ENCODE measurements at regions of chr20 and their contacts with region 1.

Region 1: GRCh38 chr20:13771853-13772453 is 12.8 kb downstream of the ESF1 start:
- DNase-seq: no peak
- H3K4me3 ChIP-seq: no peak overlapping the region
- CTCF ChIP-seq: peak; percentile 2

Region 2: DNA sequence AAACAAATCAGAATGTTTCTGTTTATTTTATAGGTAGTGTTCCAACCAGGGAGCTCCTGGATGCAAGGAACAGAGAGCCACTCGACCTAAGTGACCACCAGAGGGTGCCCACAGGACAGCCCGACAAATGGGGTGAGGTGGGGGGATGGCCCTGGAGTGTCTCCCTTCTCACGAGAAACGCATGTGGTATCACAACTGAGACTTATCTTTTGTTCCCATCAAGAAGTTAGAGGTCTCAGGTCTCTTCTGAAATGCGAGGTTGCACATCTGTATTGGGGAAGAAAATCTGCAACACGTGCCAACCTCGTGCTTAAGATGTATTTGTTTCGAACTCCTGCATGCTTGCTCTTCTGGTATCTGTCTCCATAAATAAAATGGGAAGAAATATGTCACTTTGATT is 446.9 kb before region 1 on chr20:
- CTCF ChIA-PET with region 1: interaction called, 15 read pairs
- POLR2A ChIA-PET with region 1: no interaction called
- DNase-seq: no peak
- H3K4me3 ChIP-seq: no peak overlapping the region
- CTCF ChIP-seq: peak; percentile 68

Region 3: DNA sequence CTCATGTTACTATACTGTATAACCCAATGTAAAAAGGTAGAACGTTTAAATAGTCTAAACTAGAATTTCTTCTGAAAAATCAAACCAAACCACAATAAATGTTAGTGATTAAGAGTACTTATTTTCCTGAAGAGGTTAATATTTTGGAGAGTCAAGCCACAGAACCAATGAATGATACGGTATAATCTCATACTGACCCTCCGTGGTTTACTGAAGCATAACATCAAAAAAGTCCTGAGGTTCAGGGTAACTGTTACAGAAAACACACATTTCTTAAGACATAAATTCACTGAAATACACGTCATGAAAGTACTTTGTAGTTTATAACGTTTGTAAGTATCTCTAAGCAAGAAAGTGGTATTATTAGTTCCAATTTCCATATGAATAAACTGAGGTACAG is 16.1 kb before region 1 on chr20:
- CTCF ChIA-PET with region 1: interaction called, 32 read pairs
- POLR2A ChIA-PET with region 1: no interaction called
- DNase-seq: no peak
- H3K4me3 ChIP-seq: no peak overlapping the region
- CTCF ChIP-seq: no peak

Region 4: DNA sequence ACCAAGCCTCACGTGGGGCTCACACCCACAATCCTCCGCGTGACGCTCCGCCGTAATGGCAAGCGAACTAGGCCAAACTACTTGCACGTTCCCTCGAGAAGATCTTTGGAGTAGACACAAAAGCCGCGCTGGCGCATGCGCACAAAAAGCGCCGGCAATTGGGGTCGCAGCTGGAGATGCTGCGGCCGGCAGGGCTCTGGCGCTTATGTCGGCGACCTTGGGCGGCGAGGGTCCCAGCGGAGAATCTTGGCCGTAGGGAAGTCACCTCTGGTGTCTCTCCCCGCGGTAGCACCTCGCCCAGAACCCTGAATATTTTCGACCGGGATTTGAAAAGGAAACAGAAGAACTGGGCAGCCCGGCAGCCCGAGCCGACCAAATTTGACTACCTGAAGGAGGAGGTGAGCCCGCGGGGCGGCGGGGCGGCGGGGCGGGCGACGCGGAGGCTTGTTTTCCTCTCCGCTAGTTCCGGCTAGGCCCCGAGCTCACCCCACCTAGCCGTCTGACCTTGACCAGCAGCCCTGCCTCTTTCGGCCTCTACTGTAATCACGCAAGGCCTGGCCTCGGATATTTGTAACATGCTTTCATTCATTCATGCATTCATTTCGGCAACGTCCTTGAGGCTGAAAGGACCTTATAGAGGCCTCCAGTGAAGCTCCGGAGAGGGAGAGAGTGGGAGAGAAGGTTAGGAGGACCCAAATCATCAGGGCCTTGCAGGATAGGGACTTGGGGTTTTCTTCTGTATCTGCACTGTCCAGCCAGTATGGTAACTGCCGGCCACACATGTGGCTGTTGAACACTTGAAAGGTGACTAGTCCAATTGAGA is 13.2 kb after region 1 on chr20 and contains the starts of genes ESF1 and NDUFAF5:
- CTCF ChIA-PET with region 1: interaction called, 27 read pairs
- POLR2A ChIA-PET with region 1: interaction called, 4 read pairs
- DNase-seq: peak; percentile 81
- H3K4me3 ChIP-seq: peak within 1 kb of the TSS; percentile 90
- CTCF ChIP-seq: no peak

Region 5: GRCh38 chr20:14401479-14402138 is 629.7 kb after region 1 on chr20:
- CTCF ChIA-PET with region 1: no interaction called
- POLR2A ChIA-PET with region 1: no interaction called
- DNase-seq: no peak
- H3K4me3 ChIP-seq: no peak overlapping the region
- CTCF ChIP-seq: no peak

Region 6: DNA sequence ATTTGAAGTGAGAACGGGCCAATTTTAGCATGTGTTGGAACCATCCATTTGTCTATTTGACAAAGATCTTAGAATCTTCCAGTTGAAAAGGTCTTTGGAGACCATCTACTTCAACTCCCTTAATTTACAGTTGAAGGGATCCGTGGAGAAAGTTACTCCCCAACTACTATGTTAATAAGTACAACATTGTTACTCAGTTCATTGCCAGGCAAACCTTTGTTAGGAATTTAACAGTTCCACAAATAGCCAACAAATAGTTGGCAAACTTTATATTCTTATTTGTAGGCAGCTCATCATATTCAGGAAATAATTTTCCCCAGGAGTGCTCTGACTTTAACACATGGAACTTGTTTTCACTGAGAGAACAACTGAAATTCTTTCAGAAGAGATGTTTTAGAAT is 646.4 kb after region 1 on chr20:
- CTCF ChIA-PET with region 1: no interaction called
- POLR2A ChIA-PET with region 1: no interaction called
- DNase-seq: no peak
- H3K4me3 ChIP-seq: no peak overlapping the region
- CTCF ChIP-seq: no peak